Mammary epithelial cell (primary cell): ENCODE measurements at regions of chr20 and their contacts with region 1.

Region 1: DNA sequence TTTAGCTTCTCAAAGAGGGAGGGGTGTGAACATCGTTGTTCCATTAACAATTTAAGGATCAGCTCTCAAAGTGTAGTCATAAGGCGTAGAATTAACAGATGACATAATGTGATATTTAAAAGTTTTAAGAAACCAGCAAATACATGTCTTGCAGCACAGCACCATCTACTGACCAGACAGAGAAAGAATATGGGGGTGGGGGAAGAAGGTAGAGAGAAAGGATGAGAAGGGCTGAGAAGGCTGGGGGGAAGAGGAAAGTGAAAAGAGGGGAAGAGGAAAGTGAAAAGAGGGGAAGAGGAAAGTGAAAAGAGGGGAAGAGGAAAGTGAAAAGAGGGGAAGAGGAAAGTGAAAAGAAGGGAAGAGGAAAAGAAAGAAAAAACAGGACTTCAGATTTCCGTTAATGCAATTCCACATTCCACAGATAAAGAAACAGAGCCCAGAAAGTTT is 80.9 kb downstream of the HAO1 start:
- DNase-seq: peak; percentile 65
- H3K4me3 ChIP-seq: no peak overlapping the region
- H3K27ac ChIP-seq: peak overlapping the region; percentile 36
- H3K4me1 ChIP-seq: peaks cover 44% of the 10 kb centered on the region
- H3K27me3 ChIP-seq: no peaks in the 10 kb centered on the region
- CTCF ChIP-seq: peak; percentile 55 to 77

Region 2: GRCh38 chr20:6590891-6591631 is 1268.3 kb before region 1 on chr20:
- CTCF ChIA-PET with region 1: no interaction called
- dilution Hi-C with region 1: no loop called
- in situ Hi-C with region 1: no loop called
- intact Hi-C with region 1: loop called (anchors 2 kb)
- DNase-seq: peak; percentile 99
- H3K4me3 ChIP-seq: no peak overlapping the region
- H3K27ac ChIP-seq: peak overlapping the region; percentile 96
- H3K4me1 ChIP-seq: peaks cover 22% of the 10 kb centered on the region
- H3K27me3 ChIP-seq: no peaks in the 10 kb centered on the region
- CTCF ChIP-seq: no peak

Region 3: DNA sequence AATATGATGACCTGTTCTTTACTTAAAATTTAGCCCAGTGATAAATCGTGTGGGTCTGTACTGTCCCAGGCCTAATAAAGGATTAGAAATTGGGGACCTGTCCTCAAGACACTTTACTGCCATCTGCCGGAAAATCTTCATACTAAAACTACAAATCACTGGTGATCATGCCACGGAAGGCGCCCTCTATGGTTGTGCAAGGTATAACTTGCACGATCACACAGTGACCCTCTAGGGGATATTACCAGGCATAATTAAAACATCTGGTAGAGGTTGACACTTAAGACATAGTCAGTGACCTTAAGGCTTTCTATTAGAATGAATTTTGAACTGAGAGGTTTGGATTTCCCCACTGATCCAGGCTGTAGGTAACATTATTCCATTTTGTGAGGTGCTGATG is 919.3 kb before region 1 on chr20:
- CTCF ChIA-PET with region 1: no interaction called
- dilution Hi-C with region 1: no loop called
- in situ Hi-C with region 1: no loop called
- intact Hi-C with region 1: loop called (anchors 2 kb)
- DNase-seq: peak; percentile 1
- H3K4me3 ChIP-seq: no peak overlapping the region
- H3K27ac ChIP-seq: no peak overlapping the region
- H3K4me1 ChIP-seq: peaks cover 6% of the 10 kb centered on the region
- H3K27me3 ChIP-seq: no peaks in the 10 kb centered on the region
- CTCF ChIP-seq: peak; percentile 85 to 88

Region 4: GRCh38 chr20:7375905-7376304 is 483.5 kb before region 1 on chr20:
- CTCF ChIA-PET with region 1: no interaction called
- dilution Hi-C with region 1: no loop called
- in situ Hi-C with region 1: loop called in 1 of 2 experiments (anchors 25 kb)
- intact Hi-C with region 1: loop called (anchors 1 kb)
- DNase-seq: no peak
- H3K4me3 ChIP-seq: no peak overlapping the region
- H3K27ac ChIP-seq: no peak overlapping the region
- H3K4me1 ChIP-seq: peaks cover 13% of the 10 kb centered on the region
- H3K27me3 ChIP-seq: no peaks in the 10 kb centered on the region
- CTCF ChIP-seq: peak; percentile 53 to 55

Region 5: DNA sequence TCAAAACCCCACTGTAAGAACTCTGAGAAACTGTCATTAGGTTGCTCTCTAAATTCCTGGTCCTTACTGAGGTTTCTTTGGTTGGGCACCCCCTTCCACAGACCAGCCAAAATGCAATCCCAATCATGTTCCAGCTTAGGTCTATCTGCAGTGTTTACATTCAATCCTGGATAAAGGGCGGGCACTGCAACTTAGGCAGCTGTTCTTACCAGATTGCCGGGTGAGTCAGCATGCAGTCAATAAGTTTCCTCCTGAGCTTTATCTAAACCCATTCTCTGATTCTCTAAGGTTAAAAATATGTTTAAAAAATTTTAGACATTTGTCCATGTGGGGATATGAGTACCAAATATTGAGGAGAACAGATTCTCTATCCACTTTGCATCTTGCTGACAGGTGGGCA is 116.9 kb before region 1 on chr20:
- CTCF ChIA-PET with region 1: no interaction called
- dilution Hi-C with region 1: no loop called
- in situ Hi-C with region 1: no loop called
- intact Hi-C with region 1: loop called (anchors 1 kb)
- DNase-seq: peak; percentile 63
- H3K4me3 ChIP-seq: no peak overlapping the region
- H3K27ac ChIP-seq: no peak overlapping the region
- H3K4me1 ChIP-seq: peaks cover 44% of the 10 kb centered on the region
- H3K27me3 ChIP-seq: no peaks in the 10 kb centered on the region
- CTCF ChIP-seq: no peak